Astrocyte of the spinal cord (primary cell): ENCODE measurements at regions of chr2 and their contacts with region 1.

Region 1: GRCh38 chr2:37414470-37414949 is 70.1 kb downstream of the QPCT start:
- DNase-seq: peak; percentile 80
- H3K4me3 ChIP-seq: no peak overlapping the region
- CTCF ChIP-seq: peak; percentile 83

Region 2: DNA sequence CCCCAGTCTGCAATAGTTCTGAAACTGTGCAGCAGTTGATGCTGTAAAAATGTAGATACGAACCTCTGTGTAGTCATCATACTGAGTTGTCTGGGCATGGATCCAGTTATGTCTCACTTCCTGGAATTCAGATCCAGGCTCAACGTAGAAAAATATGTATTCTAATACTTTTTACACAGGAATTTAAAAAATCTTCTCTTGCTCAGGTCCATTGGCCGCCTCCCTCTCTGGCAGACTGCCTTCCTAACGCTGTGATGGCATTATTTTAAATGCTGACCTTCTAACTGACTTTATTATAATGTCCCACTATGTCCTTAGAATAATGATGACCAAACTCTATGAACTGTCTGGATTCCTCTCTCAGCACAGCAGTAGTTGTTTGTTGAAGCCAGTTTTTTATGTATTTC is 936.2 kb before region 1 on chr2:
- in situ Hi-C with region 1: no loop called
- DNase-seq: peak; percentile 81
- H3K4me3 ChIP-seq: no peak overlapping the region
- CTCF ChIP-seq: no peak

Region 3: DNA sequence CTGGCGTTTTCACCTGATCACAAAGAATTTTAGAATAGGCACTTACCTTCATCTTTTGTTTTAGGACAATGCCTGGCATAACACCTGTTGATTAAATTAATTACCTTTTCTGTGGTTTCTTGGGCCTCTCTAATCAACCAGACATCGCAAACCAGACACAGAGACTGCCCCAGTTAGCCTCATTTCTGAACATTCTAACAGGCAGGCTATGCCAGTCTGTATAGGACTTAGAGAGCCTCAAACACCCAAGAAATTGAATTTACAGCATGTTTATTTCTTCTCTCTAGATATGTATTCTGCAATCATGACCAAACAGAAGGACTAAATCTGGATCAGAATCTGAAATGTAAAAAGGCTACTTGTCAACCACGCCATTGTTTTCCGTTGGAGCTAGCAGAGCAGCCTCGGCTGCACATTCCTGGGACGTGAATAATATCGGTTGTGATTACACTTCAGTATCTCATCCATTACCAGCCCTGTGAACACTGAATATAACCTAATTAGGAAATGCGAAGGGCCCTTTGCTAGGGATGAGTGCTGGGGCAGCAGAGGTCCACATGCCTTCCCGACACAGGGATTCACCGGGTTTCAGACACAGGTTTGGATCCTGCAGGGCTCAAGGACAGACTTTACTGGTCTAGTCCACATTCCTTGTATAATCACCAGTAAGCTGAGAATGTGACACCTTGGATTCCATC is 274.4 kb after region 1 on chr2:
- in situ Hi-C with region 1: loop called (anchors 25 kb)
- DNase-seq: peak; percentile 87
- H3K4me3 ChIP-seq: no peak overlapping the region
- CTCF ChIP-seq: no peak